ENCODE measurements at regions of chr4 and their contacts with region 1.

Region 1: DNA sequence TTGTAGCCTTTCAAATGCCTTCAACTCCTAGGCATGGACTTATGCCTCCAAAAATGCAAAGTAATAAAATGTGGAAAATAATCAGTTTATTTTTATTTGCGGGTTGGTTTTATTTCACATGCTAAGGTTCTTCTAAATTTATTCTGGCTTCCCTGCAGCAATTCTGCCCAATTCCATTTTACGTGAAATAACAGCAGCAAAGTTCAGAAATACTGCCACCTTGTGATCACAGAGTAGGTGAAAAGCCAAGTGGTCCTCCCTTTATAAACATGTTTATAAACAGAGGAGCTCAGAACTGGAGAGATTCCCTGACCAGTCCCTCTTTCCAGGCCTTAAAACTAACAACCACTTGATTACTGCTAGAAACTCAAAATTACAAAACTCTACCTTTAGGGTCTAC is 14.7 kb upstream of the DCHS2 start:
- DNase-seq: no peak

Region 2: GRCh38 chr4:154314248-154314647 is 192.0 kb before region 1 on chr4:
- intact Hi-C with region 1: no loop called
- DNase-seq: no peak

Region 3: GRCh38 chr4:154332681-154333421 is 173.4 kb before region 1 on chr4:
- intact Hi-C with region 1: loop called (anchors 5 kb)
- DNase-seq: no peak

Region 4: GRCh38 chr4:154399259-154399974 is 106.8 kb before region 1 on chr4:
- intact Hi-C with region 1: loop called (anchors 5 kb)
- DNase-seq: no peak